GM13976 (cell line): ENCODE measurements at regions of chr18 and their contacts with region 1.

Region 1: DNA sequence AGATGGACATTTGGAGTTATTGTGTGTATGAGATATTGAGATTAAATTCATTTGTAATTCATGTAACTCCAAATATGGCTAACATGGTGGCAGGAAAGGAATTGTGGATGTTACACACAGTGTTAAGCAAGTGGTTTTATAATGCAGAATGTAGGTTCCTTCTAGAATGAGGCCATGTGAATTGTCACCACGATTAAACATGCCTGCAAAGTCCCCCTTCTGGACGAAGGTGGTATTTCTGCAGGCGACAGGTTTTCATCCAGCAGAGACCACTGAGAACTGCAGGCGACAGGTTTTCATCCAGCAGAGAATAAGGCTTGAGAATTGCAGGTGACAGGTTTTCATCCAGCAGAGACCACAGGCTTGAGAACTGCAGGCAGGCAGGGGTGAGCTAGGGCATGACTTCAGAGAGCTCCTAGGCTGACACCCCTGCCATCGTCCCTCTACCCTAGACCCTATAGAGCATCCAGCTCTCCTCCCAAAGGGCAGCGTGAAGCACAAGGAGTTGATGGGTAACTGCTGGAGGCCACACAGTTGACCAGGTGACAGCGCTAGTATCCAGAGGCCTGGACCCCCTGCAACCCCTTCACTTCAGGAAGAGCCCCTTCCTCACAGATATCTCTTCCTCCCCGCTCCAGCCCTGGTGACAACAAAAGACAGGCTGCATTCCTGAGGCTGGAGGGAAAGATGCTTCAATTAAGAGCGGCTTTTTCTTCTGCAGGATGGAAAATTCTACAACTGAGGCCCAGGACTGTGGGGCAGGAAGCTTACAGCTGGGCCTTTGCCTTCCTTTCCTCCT is 175.8 kb downstream of the LOXHD1 start:
- DNase-seq: peak; percentile 53
- CTCF ChIP-seq: peak; percentile 28

Region 2: DNA sequence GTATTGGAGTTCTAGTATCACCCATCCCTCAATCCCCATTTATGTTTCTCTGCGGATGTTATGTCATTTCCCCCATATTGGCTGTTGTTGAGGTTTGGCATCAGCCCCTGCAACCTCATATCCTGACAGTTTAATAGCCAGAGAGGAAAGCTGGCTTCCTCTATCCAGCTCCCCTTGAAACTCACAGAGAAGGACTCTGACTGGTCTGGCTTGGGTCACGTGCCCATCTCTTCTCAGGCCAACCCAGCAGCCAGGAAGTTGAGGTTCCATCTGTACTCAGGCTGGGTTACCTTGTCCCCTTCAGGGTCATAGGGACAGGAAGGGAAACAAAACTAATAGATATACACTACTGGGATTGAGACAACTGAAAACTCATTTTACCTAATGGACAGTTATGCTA is 1014.0 kb before region 1 on chr18:
- in situ Hi-C with region 1: no loop called
- DNase-seq: no peak
- CTCF ChIP-seq: no peak

Region 3: GRCh38 chr18:46148810-46149209 is 332.4 kb before region 1 on chr18:
- in situ Hi-C with region 1: loop called (anchors 10 kb)
- DNase-seq: peak; percentile 46
- CTCF ChIP-seq: peak; percentile 63